Dorsolateral prefrontal cortex (tissue), 120 donors: ENCODE measurements at regions of chr16 and their contacts with region 1.

Region 1: DNA sequence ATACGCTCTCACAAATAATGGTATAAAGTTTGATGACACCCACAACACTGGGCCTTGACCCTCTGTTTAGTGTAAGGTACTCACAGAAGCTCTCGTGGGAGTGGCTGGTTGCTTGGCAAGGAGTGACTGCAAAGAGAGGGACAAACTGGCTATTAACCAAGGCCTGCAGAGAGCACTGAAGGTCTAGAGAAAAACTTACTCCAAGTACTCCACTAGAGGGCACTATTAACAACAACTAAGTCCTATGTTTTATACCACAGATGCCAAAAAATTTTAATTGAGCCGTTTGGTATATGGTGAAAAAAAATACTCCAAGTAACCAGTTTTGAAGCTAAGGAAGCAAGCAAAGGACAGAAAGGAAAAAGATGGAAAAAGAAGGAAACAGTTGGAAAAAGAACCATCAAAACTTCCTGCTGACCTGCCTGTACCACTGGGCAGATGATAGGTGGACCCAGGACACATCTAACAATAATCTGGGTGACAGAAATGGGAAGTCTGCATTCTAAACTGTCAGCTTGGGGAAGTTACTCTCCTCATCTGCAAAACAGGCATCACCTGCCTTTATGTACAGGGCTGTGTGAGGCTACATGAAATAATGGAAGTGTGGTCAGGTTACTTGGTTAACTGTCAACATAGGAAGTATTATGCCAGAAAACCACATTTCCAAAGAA is 23.2 kb downstream of the DYNC1LI2 start:
- DNase-seq: peak in 1 of 10 donors; percentile 45
- H3K4me3 ChIP-seq: no peak overlapping the region
- H3K27ac ChIP-seq: peak overlapping the region in 53 of 59 donors; percentile 4 to 80 (median 59)
- H3K27me3 ChIP-seq: no peaks in the 10 kb centered on the region
- CTCF ChIP-seq: peak; percentile 67 to 92 (median 82)

Region 2: GRCh38 chr16:66758086-66758485 is 29.8 kb after region 1 on chr16:
- intact Hi-C with region 1: no loop called
- DNase-seq: no peak
- H3K4me3 ChIP-seq: no peak overlapping the region
- H3K27ac ChIP-seq: no peak overlapping the region
- H3K27me3 ChIP-seq: no peaks in the 10 kb centered on the region
- CTCF ChIP-seq: no peak

Region 3: GRCh38 chr16:66830422-66831404 is 102.5 kb after region 1 on chr16 and contains the start of gene NAE1:
- intact Hi-C with region 1: loop called (anchors 5 kb)
- DNase-seq: peak; percentile 61 to 92 (median 77)
- H3K4me3 ChIP-seq: peak within 1 kb of the TSS; percentile 40 to 99 (median 90)
- H3K27ac ChIP-seq: peak within 1 kb of the TSS in 58 of 59 donors; percentile 35 to 96 (median 89)
- H3K27me3 ChIP-seq: no peaks in the 10 kb centered on the region
- CTCF ChIP-seq: peak; percentile 57 to 99 (median 95)
- total RNA-seq, gene NAE1: 42.3 to 101 (median 76.7) TPM

Region 4: GRCh38 chr16:66859397-66860068 is 131.3 kb after region 1 on chr16:
- intact Hi-C with region 1: loop called in 1 of 2 experiments (anchors 10 kb)
- DNase-seq: no peak
- H3K4me3 ChIP-seq: no peak overlapping the region
- H3K27ac ChIP-seq: peak overlapping the region in 8 of 59 donors; percentile 11 to 47 (median 22)
- H3K27me3 ChIP-seq: no peaks in the 10 kb centered on the region
- CTCF ChIP-seq: no peak